Left colon (tissue), 2 donors: ENCODE measurements at regions of chr19 and their contacts with region 1.

Region 1: DNA sequence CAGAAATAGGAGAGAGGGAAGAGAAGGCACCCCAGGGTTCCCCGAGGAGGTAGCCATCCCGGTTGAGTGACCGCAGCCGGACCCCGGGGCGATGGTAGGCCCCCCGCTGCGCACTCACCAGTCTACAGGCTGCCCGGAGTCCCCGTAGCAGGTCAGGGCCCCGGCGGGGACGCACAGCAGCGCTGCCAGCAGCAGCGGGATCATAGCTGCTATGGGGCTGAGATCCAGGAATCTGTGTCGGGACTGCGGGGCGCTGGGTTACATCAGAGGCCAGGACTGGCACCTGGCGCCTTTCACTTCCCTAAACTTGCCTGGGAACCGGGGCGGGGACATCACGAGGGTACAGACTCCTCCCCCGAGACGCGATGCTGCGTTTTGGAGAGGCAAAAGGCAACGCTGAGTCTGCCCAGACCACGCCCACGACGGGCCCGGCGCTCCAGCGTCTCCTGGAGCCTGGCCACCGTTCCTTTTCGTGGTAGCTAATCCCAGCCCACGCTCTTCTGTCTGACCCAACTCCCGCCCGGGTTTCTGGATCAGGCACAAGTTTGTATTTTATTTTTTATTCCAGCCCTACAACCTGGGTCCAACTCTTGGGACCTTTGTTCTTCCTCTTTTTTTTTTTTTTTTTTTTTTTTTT is at the start of gene DNASE2:
- DNase-seq: peak; percentile 97 to 99
- ATAC-seq: peak; percentile 78
- total RNA-seq, gene DNASE2: 27.7 to 39.4 TPM

Region 2: DNA sequence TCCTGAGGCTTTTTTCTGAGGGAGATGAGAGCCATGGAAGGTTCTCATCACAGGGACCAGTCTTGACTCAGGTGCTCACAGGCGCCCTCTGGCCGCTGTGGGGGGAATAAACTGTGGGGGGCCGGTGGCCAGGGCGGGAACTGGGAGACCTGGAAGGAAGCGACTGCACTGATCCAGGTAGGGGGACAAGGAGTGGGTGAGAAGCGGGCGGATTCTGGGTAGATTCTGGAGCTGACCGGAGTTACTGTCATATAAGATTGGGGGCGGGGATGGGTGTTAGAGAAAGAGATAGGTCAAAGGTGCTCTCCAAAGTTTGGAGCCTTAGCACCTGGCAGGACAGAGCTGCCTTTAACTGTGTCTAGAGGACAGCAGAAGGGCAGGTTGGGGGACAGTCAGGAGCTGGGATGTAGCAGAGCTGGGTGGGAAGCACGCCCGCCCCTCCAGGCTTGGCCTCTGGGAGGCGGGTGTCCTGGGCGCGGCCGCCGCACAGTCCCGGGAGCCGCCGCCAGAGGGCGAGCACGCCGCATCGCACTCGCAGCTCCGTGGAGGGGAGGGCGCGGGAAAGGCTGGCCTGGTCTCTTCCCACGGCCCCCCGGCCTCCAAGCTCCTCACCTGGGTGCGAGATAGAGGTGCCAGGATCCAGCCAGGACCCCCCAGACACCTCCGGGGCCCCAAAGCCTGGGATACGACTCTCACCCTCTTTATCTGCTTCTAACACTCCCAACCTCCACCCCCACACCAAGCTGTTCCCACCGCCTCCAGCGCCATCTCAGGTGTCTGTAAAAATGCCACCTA is 83.9 kb after region 1 on chr19:
- intact Hi-C with region 1: loop called in 1 of 2 experiments (anchors 10 kb)
- DNase-seq: peak; percentile 71 to 86
- ATAC-seq: peak; percentile 94